Calu3 (cell line): ENCODE measurements at regions of chr4 and their contacts with region 1.

Region 1: DNA sequence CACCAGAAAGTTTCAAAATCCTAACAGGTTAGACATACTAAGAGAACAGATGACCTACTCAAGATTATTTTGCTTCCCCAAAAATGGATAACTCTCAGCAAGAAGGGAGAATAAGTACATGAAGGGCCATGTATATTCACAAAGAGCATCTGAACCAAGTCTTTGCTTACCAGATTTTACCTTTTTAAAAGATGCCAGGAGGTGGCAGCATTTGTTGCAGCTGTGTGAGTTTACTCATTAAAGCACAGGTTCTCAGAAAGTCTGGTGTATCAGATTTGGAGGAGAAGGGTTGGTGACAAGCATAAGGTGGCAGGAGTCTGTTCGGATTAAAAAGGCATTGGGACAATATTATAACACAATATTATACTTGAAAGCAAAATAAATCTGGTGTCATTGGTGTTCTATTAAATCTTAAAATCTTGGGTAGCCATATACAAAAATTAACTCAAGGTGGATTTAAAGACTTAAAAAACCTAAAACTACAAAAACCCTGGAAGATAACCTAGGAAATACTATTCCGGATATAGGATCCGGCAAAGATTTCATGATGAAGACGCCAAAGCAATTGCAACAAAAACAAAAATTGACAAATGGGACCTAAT is 51.3 kb upstream of the NFKB1 start:
- DNase-seq: peak; percentile 27
- H3K4me3 Mint-ChIP-seq: no peak overlapping the region
- H3K27ac Mint-ChIP-seq: no peak overlapping the region
- H3K4me1 Mint-ChIP-seq: no peaks in the 10 kb centered on the region
- H3K27me3 Mint-ChIP-seq: no peaks in the 10 kb centered on the region
- CTCF ChIP-seq: peak; percentile 28

Region 2: GRCh38 chr4:101018836-101019235 is 1431.0 kb before region 1 on chr4:
- CTCF ChIA-PET with region 1: no interaction called
- intact Hi-C with region 1: no loop called
- DNase-seq: no peak
- H3K4me3 Mint-ChIP-seq: no peak overlapping the region
- H3K27ac Mint-ChIP-seq: peak overlapping the region; percentile 82
- H3K4me1 Mint-ChIP-seq: peaks cover 54% of the 10 kb centered on the region
- H3K27me3 Mint-ChIP-seq: no peaks in the 10 kb centered on the region
- CTCF ChIP-seq: no peak

Region 3: GRCh38 chr4:102713096-102713495 is 263.2 kb after region 1 on chr4:
- CTCF ChIA-PET with region 1: no interaction called
- intact Hi-C with region 1: no loop called
- DNase-seq: no peak
- H3K4me3 Mint-ChIP-seq: no peak overlapping the region
- H3K27ac Mint-ChIP-seq: no peak overlapping the region
- H3K4me1 Mint-ChIP-seq: peaks cover 18% of the 10 kb centered on the region
- H3K27me3 Mint-ChIP-seq: no peaks in the 10 kb centered on the region
- CTCF ChIP-seq: no peak

Region 4: GRCh38 chr4:103008875-103009729 is 559.2 kb after region 1 on chr4:
- CTCF ChIA-PET with region 1: no interaction called
- intact Hi-C with region 1: loop called (anchors 1 kb)
- DNase-seq: peak; percentile 25
- H3K4me3 Mint-ChIP-seq: no peak overlapping the region
- H3K27ac Mint-ChIP-seq: no peak overlapping the region
- H3K4me1 Mint-ChIP-seq: peaks cover 13% of the 10 kb centered on the region
- H3K27me3 Mint-ChIP-seq: no peaks in the 10 kb centered on the region
- CTCF ChIP-seq: peak; percentile 23

Region 5: DNA sequence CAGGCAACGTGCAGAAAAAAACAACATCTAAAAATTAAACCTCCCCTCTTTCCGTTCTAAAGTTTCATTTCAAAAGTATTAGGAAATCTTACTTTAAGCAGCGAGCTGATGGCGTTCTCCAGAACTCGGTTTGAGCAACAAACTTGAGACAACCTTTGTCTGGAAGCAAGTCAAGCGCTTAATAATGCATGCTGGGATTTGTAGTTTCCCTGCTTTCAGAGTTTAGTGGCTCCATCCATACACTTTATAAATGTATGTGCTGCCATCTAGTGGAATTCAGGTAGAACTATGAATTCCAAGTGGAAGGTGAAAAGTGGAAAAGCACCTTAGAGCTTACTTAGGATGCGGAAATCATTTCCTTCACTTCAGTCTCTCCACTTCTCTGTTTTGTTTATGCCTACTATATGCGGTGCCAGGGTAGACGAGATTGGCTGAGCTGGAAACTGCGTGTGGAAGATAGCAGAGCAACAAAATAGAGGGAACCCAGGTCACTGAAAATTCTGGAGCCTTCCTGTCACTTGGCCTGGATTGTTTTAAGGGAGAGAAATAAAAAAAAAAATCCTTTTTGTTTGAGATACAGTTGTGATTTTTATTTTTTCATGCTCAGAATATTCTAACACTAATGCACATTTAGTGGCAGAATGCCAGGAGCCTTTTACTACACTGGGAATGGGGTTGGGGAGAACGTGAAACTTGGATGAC is 650.0 kb after region 1 on chr4 and contains the start of gene BDH2:
- CTCF ChIA-PET with region 1: no interaction called
- intact Hi-C with region 1: loop called (anchors 5 kb)
- DNase-seq: peak; percentile 11
- H3K4me3 Mint-ChIP-seq: peak within 1 kb of the TSS; percentile 39
- H3K27ac Mint-ChIP-seq: no peak within 1 kb of the TSS
- H3K4me1 Mint-ChIP-seq: peaks cover 14% of the 10 kb centered on the region
- H3K27me3 Mint-ChIP-seq: no peaks in the 10 kb centered on the region
- CTCF ChIP-seq: peak; percentile 21
- total RNA-seq, gene BDH2: 8.1 and 15.2 TPM in 2 replicates